CD4-positive, alpha-beta memory T cell (primary cell): ENCODE measurements at regions of chr1 and their contacts with region 1.

Region 1: GRCh38 chr1:154398141-154398540 is 7.0 kb upstream of the IL6R start:
- DNase-seq: no peak
- H3K4me3 ChIP-seq: no peak overlapping the region
- H3K4me3 Mint-ChIP-seq: peak overlapping the region in 7 of 8 donors; percentile 13 to 87 (median 73)
- H3K27ac ChIP-seq: peak overlapping the region; percentile 40
- H3K27ac Mint-ChIP-seq: peak overlapping the region in 6 of 7 donors; percentile 54 to 96 (median 86)
- H3K4me1 ChIP-seq: peaks cover 45% of the 10 kb centered on the region
- H3K4me1 Mint-ChIP-seq: peaks cover 19 to 47% (median 33%) of the 10 kb centered on the region in 4 donors
- H3K27me3 ChIP-seq: no peaks in the 10 kb centered on the region
- H3K27me3 Mint-ChIP-seq: no peaks in the 10 kb centered on the region

Region 2: GRCh38 chr1:154137888-154138287 is 260.3 kb before region 1 on chr1:
- CTCF ChIA-PET with region 1: no interaction called
- POLR2A ChIA-PET with region 1: no interaction called
- intact Hi-C with region 1: no loop called
- DNase-seq: no peak
- H3K4me3 ChIP-seq: no peak overlapping the region
- H3K4me3 Mint-ChIP-seq: no peak overlapping the region
- H3K27ac ChIP-seq: no peak overlapping the region
- H3K27ac Mint-ChIP-seq: no peak overlapping the region
- H3K4me1 ChIP-seq: no peaks in the 10 kb centered on the region
- H3K4me1 Mint-ChIP-seq: no peaks in the 10 kb centered on the region
- H3K27me3 ChIP-seq: no peaks in the 10 kb centered on the region
- H3K27me3 Mint-ChIP-seq: no peaks in the 10 kb centered on the region

Region 3: DNA sequence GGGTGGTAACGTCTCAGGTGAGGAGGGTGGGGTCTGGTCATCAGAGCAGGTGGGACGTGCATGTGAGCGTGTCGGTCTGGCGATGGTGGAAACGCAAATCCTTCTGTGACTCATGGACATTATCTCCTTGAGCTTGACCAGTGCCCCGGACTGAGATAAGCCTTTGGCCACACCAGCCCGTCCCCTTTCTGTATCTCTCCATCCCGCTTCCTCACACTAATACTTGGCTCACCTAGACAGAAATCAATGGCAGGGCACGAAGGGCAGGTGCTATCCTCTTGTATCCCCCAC is 85.1 kb before region 1 on chr1:
- CTCF ChIA-PET with region 1: no interaction called
- POLR2A ChIA-PET with region 1: no interaction called
- intact Hi-C with region 1: no loop called
- DNase-seq: no peak
- H3K4me3 ChIP-seq: no peak overlapping the region
- H3K4me3 Mint-ChIP-seq: no peak overlapping the region
- H3K27ac ChIP-seq: no peak overlapping the region
- H3K27ac Mint-ChIP-seq: peak overlapping the region in 1 of 7 donors; percentile 18
- H3K4me1 ChIP-seq: peaks cover 4% of the 10 kb centered on the region
- H3K4me1 Mint-ChIP-seq: peaks cover 4 to 5% (median 5%) of the 10 kb centered on the region in 4 donors
- H3K27me3 ChIP-seq: no peaks in the 10 kb centered on the region
- H3K27me3 Mint-ChIP-seq: no peaks in the 10 kb centered on the region

Region 4: DNA sequence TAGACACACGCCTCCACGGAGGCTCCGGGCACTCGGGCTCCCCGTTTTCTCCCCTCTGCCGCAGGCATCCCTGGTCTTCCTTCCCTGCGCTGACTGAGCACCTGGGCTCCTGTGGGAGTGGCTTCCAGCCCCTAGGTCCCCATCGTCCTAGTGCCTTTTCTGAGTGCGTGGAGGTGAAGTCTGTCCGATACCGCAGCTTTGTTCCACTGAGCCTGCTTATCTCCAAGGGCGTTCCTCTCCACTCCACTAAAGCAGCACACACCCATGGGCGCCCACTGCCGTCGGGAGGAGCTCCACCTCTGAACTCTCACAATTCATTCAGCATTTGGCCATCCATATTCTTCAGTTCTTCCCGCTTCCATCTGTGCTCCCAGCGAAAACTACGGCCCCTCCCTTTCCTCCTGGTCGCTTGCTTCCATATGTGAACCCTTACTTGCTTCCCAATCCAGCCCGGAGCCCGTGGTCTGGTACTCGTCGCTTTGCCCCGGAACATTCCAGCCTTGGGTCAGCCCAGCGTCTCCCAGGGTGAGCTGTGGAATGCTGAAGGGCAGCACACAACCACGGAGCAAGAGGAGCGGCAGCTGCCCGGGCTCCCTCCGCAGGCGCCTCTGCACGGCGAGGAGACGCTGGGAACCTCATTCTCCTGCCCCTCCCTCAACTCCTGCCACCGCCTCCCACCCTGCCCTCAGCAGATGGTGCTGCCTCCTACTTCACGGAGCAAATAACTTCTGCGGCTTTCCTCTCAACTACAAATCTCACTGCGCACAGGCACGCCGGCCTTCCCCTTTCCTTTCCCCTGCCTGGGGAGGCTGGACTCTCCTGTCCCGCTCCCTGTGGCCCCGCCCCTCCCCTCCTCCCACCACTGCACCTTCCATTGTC is 45.3 kb before region 1 on chr1:
- CTCF ChIA-PET with region 1: interaction called, 20 read pairs
- POLR2A ChIA-PET with region 1: interaction called, 97 read pairs
- intact Hi-C with region 1: loop called (anchors 1 kb)
- DNase-seq: peak; percentile 44 to 68 (median 48)
- H3K4me3 ChIP-seq: peak overlapping the region; percentile 69 to 77
- H3K4me3 Mint-ChIP-seq: peak overlapping the region; percentile 84 to 95 (median 92)
- H3K27ac ChIP-seq: peak overlapping the region; percentile 51
- H3K27ac Mint-ChIP-seq: peak overlapping the region; percentile 38 to 96 (median 90)
- H3K4me1 ChIP-seq: peaks cover 54% of the 10 kb centered on the region
- H3K4me1 Mint-ChIP-seq: peaks cover 30 to 61% (median 44%) of the 10 kb centered on the region in 4 donors
- H3K27me3 ChIP-seq: no peaks in the 10 kb centered on the region
- H3K27me3 Mint-ChIP-seq: no peaks in the 10 kb centered on the region

Region 5: GRCh38 chr1:154386643-154387352 is 11.3 kb before region 1 on chr1:
- CTCF ChIA-PET with region 1: interaction called, 36 read pairs
- POLR2A ChIA-PET with region 1: interaction called, 116 read pairs
- intact Hi-C with region 1: no loop called
- DNase-seq: peak in 4 of 5 donors; percentile 43 to 86 (median 58)
- H3K4me3 ChIP-seq: peak overlapping the region in 1 of 2 donors; percentile 34
- H3K4me3 Mint-ChIP-seq: peak overlapping the region; percentile 79 to 88 (median 85)
- H3K27ac ChIP-seq: peak overlapping the region; percentile 67
- H3K27ac Mint-ChIP-seq: peak overlapping the region; percentile 88 to 99 (median 97)
- H3K4me1 ChIP-seq: peaks cover 36% of the 10 kb centered on the region
- H3K4me1 Mint-ChIP-seq: peaks cover 22 to 34% (median 28%) of the 10 kb centered on the region in 4 donors
- H3K27me3 ChIP-seq: no peaks in the 10 kb centered on the region
- H3K27me3 Mint-ChIP-seq: no peaks in the 10 kb centered on the region